KBM-7 (cell line): ENCODE measurements at regions of chr5 and their contacts with region 1.

Region 1: GRCh38 chr5:76225336-76225735 is 142.2 kb downstream of the SV2C start:
- DNase-seq: no peak

Region 2: GRCh38 chr5:75894482-75894881 is 330.9 kb before region 1 on chr5:
- in situ Hi-C with region 1: no loop called
- DNase-seq: no peak

Region 3: GRCh38 chr5:76145945-76146344 is 79.4 kb before region 1 on chr5:
- in situ Hi-C with region 1: loop called (anchors 25 kb)
- DNase-seq: peak; percentile 3